Endothelial cell of umbilical vein (primary cell): ENCODE measurements at regions of chr5 and their contacts with region 1.

Region 1: DNA sequence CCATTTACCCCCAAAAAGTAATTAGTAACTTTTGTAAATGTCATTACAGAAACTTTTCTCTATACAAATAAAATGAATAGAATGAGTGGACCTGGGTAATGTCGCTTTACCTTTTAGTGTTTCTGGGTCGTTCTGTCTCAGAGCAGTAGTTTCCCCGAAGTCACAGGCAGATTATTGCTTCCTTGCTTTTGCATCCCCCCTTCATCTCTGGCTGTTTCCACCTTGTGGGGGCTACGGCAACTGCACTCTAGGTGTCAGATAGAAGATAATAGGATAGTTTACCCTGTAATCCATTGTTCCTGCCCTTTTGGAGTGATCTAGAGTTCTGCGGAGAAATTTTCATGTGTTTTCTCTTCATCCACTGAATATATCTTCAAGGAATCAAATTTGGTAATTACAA is 68.7 kb downstream of the PRR16 start:
- DNase-seq: no peak
- H3K4me3 ChIP-seq: no peak overlapping the region
- H3K27ac ChIP-seq: no peak overlapping the region
- H3K4me1 ChIP-seq: no peaks in the 10 kb centered on the region
- H3K27me3 ChIP-seq: no peaks in the 10 kb centered on the region
- CTCF ChIP-seq: peak in 1 of 2 donors; percentile 7
- POLR2A ChIP-seq: no peak

Region 2: DNA sequence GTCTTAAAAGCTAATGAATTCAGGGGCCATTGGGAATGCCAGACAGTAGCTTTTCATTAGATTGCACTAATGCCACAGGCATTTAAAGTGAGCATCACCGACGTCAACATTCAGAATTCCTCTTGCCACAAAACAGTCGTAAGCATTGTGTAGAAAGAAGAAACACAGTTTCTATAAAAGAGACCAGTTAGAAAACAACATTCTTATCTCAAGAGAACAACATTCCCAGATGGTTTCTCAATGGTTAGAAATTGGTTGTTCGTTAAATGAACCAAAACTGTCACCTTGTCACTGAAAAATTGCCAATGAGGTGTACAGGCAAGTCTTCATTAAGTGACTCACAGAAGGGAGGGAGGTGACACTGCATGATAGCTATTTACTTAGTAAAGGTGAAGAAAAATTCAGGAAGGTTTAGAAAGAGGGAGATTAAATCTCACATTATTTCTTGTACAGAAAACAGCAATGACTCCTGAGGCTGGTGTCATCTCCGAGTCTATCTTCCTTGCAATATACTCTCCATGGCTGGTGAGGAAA is 470.3 kb before region 1 on chr5:
- CTCF ChIA-PET with region 1: no interaction called
- POLR2A ChIA-PET with region 1: no interaction called
- dilution Hi-C with region 1: no loop called
- intact Hi-C with region 1: loop called (anchors 10 kb)
- DNase-seq: no peak
- H3K4me3 ChIP-seq: no peak overlapping the region
- H3K27ac ChIP-seq: no peak overlapping the region
- H3K4me1 ChIP-seq: no peaks in the 10 kb centered on the region
- H3K27me3 ChIP-seq: no peaks in the 10 kb centered on the region
- CTCF ChIP-seq: no peak
- POLR2A ChIP-seq: no peak